ENCODE measurements at regions of chr6 and their contacts with region 1.

Region 1: GRCh38 chr6:149840345-149841075 is 23.6 kb downstream of the LRP11 start:
- DNase-seq: peak; percentile 68
- ATAC-seq: peak; percentile 99
- H3K4me3 ChIP-seq: no peak overlapping the region
- H3K27ac ChIP-seq: no peak overlapping the region
- H3K4me1 ChIP-seq: peaks cover 19 to 36% of the 10 kb centered on the region in 2 experiments
- H3K27me3 ChIP-seq: no peaks in the 10 kb centered on the region
- CTCF ChIP-seq: peak; percentile 84 to 93 (median 92)
- POLR2A ChIP-seq: no peak
- RAD21 ChIP-seq: peak; percentile 96

Region 2: GRCh38 chr6:149863697-149864577 is 23.4 kb after region 1 on chr6 and contains the start of gene LRP11:
- CTCF ChIA-PET with region 1: interaction called, 5 read pairs
- POLR2A ChIA-PET with region 1: no interaction called
- RAD21 ChIA-PET with region 1: interaction called in 1 of 2 experiments, 5 read pairs
- intact Hi-C with region 1: loop called (anchors 1 kb)
- DNase-seq: no peak
- ATAC-seq: peak; percentile 84
- H3K4me3 ChIP-seq: peak within 1 kb of the TSS; percentile 54 to 71
- H3K27ac ChIP-seq: peak within 1 kb of the TSS; percentile 90
- H3K4me1 ChIP-seq: peaks cover 8 to 44% of the 10 kb centered on the region in 2 experiments; a peak in 3 of 4 replicates
- H3K27me3 ChIP-seq: no peaks in the 10 kb centered on the region
- CTCF ChIP-seq: no peak
- POLR2A ChIP-seq: peak; percentile 54
- RAD21 ChIP-seq: no peak
- total RNA-seq, gene LRP11: 27.8 TPM

Region 3: GRCh38 chr6:150006961-150007464 is 166.5 kb after region 1 on chr6:
- CTCF ChIA-PET with region 1: no interaction called
- POLR2A ChIA-PET with region 1: no interaction called
- RAD21 ChIA-PET with region 1: no interaction called
- intact Hi-C with region 1: no loop called
- DNase-seq: no peak
- ATAC-seq: peak; percentile 35; the same call in 1 of the 2 replicates
- H3K4me3 ChIP-seq: no peak overlapping the region
- H3K27ac ChIP-seq: no peak overlapping the region
- H3K4me1 ChIP-seq: peaks cover 18 to 33% of the 10 kb centered on the region in 2 experiments
- H3K27me3 ChIP-seq: no peaks in the 10 kb centered on the region
- CTCF ChIP-seq: peak in 2 of 3 experiments; percentile 48 to 66; a peak in 5 of 6 replicates
- POLR2A ChIP-seq: no peak
- RAD21 ChIP-seq: no peak; the same call in 1 of the 2 replicates

Measured in HCT116 (cell line).